ENCODE measurements at regions of chr17 and their contacts with region 1.

Region 1: DNA sequence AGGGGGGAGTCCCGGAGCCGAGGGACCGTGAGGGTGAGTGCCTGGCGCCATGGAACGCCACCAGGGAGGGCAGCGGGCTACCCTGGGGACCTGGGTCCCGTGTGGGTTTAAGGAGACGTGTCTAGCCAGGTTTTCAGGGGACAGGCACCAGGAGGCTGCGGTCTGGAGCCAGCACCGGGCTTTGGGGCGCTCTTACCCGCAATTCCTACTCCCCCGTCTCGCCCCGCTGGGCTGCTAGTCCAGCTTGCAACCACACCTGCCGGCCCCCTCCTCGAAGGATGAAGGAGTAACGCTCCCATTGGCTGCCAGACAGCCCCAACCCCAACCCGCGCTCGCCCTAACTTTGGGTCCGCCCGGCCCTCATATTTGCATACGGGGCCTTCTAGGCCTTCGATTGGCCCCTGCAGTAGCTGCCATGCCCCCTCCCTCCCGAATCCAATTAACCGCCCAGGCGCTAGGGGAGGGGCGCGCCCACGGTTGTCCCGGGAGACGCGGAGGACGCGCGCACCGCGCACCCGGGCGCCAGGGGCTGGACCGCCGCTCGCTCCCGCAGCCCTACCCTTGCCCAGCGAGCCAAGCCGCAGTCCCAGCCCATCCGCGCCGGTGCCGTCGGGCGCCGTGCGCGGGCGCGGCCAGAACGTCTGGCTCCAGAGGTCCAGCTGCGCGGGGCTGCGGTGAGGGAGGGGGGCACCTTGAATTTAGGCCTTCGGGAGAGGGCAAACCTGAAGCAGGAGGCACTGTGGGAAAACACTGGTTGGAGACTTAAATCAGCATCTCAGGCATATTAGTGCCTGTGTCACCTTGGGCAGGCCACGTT is at the start of gene TTLL6:
- DNase-seq: peak; percentile 89 to 90
- H3K4me3 ChIP-seq: peak within 1 kb of the TSS; percentile 73 to 90 (median 83)
- H3K27ac ChIP-seq: peak within 1 kb of the TSS; percentile 76
- H3K4me1 ChIP-seq: peaks cover 15 to 18% (median 17%) of the 10 kb centered on the region in 4 experiments
- H3K27me3 ChIP-seq: no peaks in the 10 kb centered on the region
- CTCF ChIP-seq: no peak
- EP300 ChIP-seq: peak in 1 of 2 experiments; percentile 65; a peak in 1 of 3 replicates
- POLR2A ChIP-seq: peak in 1 of 2 experiments; percentile 87; a peak in 2 of 3 replicates
- RAD21 ChIP-seq: no peak
- total RNA-seq, gene TTLL6: 2.6 and 2.7 TPM in 2 replicates

Region 2: DNA sequence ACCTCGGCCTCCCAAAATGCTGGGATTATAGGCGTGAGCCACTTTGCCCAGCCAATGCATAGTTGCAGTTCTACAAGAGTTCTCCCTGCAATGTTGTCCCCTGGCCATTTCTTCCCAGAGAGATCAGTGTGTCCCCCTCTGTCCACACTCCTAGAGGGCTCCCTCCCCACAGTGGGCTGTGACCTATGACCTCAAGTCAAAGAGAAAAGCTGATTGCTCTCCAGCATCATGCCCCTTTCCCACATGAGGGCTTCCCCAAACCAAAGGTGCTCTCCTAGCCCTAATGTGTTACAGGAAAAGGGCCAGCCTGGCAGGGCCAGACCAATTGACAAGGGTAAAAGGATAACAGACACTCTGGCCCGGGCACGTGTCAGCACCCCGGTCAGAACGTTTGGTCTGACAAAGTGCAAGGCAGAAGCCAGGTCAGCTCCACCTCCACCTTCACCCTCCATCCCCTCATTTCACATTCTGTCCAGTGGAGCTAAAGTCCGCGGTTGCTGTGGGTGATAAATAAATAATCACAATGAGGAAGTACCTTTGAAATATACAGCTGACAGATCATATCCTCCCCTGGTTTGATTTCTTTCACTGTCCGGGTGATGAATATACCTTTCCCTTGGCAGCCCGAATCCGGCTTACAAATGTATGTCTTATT is 17.8 kb before region 1 on chr17:
- CTCF ChIA-PET with region 1: interaction called, 67 read pairs
- POLR2A ChIA-PET with region 1: interaction called, 5 read pairs
- DNase-seq: no peak
- H3K4me3 ChIP-seq: no peak overlapping the region
- H3K27ac ChIP-seq: no peak overlapping the region
- H3K4me1 ChIP-seq: no peaks in the 10 kb centered on the region
- H3K27me3 ChIP-seq: peaks cover 0 to 2% (median 0%) of the 10 kb centered on the region in 4 experiments; a peak in 1 of 7 replicates
- CTCF ChIP-seq: no peak
- EP300 ChIP-seq: no peak
- POLR2A ChIP-seq: no peak
- RAD21 ChIP-seq: no peak

Region 3: GRCh38 chr17:48804925-48805411 is 12.0 kb before region 1 on chr17:
- CTCF ChIA-PET with region 1: interaction called, 67 read pairs
- POLR2A ChIA-PET with region 1: interaction called, 5 read pairs
- DNase-seq: peak; percentile 68 to 97
- H3K4me3 ChIP-seq: peak overlapping the region in 1 of 4 experiments; percentile 35; a peak in 3 of 8 replicates
- H3K27ac ChIP-seq: no peak overlapping the region
- H3K4me1 ChIP-seq: no peaks in the 10 kb centered on the region; a peak in 2 of 7 replicates
- H3K27me3 ChIP-seq: peaks cover 0 to 2% (median 0%) of the 10 kb centered on the region in 4 experiments; a peak in 1 of 7 replicates
- CTCF ChIP-seq: peak; percentile 90 to 93 (median 90)
- EP300 ChIP-seq: no peak
- POLR2A ChIP-seq: no peak
- RAD21 ChIP-seq: peak; percentile 98

Region 4: GRCh38 chr17:48830840-48831548 is 14.0 kb after region 1 on chr17 and contains the start of gene CALCOCO2:
- CTCF ChIA-PET with region 1: interaction called, 2,590 read pairs
- POLR2A ChIA-PET with region 1: interaction called, 16 read pairs
- DNase-seq: peak; percentile 60 to 87
- H3K4me3 ChIP-seq: peak within 1 kb of the TSS; percentile 50 to 96 (median 76)
- H3K27ac ChIP-seq: no peak within 1 kb of the TSS
- H3K4me1 ChIP-seq: peaks cover 0 to 4% (median 0%) of the 10 kb centered on the region in 4 experiments; a peak in 2 of 7 replicates
- H3K27me3 ChIP-seq: no peaks in the 10 kb centered on the region
- CTCF ChIP-seq: no peak
- EP300 ChIP-seq: no peak
- POLR2A ChIP-seq: no peak
- RAD21 ChIP-seq: no peak
- total RNA-seq, gene CALCOCO2: 27.7 and 31.8 TPM in 2 replicates